AG04450 (cell line): ENCODE measurements at regions of chr5 and their contacts with region 1.

Region 1: DNA sequence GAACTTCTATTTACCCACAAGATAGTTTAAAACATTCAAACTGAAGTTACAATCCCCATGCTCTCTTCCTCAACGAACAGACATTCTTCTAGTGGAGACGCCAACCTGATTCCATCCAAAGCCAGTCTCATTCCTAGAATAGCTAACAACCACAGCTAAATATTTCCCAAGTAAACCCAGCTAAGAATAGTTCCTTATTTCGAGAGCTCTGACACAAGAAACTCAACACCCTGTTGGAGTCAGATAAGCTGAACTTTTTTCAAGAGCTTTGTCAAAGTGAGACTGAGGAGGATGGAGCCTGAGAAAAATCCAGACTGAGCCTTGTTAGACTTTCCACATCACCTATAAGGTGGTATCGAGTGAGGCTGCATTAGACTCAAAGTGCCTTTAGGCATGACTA is 56.7 kb upstream of the RPS23 start:
- DNase-seq: peak; percentile 81
- H3K4me3 ChIP-seq: no peak overlapping the region
- H3K27ac ChIP-seq: peak overlapping the region; percentile 90
- H3K27me3 ChIP-seq: no peaks in the 10 kb centered on the region
- CTCF ChIP-seq: no peak

Region 2: DNA sequence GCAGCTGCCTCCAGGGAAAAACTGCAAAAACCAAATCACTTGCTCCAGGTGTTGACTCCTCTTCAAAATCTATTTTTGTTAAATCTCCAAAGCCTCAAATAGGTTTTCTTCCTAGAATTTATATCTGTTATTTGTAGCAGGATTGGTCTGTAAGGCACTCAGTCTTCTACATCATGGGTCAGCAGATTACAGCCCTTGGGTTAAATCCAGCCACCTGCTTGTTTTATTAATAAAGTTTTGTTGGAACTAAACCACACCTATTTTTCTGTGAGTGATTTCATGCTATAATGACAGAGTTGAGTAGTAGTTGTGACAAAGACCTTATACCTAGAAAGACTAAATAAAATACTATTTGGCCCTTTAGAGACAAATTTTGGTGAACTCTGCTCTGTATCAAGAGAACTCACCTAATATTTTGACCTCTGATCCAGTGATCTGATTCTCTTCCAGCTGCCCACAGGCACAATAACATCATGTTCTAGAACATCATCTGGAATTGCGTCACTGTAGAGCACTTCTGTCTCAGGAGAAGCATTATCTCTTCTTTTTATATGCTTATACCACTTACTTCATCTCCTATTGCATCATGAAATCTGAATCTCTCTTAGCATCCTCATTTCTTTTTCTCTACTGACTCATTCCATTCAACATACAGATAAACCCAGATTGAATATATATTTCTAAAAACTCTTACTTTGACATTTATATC is 186.8 kb before region 1 on chr5:
- CTCF ChIA-PET with region 1: no interaction called
- POLR2A ChIA-PET with region 1: no interaction called
- DNase-seq: no peak
- H3K4me3 ChIP-seq: no peak overlapping the region
- H3K27ac ChIP-seq: no peak overlapping the region
- H3K27me3 ChIP-seq: no peaks in the 10 kb centered on the region
- CTCF ChIP-seq: no peak

Region 3: GRCh38 chr5:82174128-82174918 is 160.5 kb before region 1 on chr5:
- CTCF ChIA-PET with region 1: no interaction called
- POLR2A ChIA-PET with region 1: no interaction called
- DNase-seq: no peak
- H3K4me3 ChIP-seq: no peak overlapping the region
- H3K27ac ChIP-seq: no peak overlapping the region
- H3K27me3 ChIP-seq: no peaks in the 10 kb centered on the region
- CTCF ChIP-seq: peak; percentile 58

Region 4: GRCh38 chr5:82277613-82278094 is 57.2 kb before region 1 on chr5:
- CTCF ChIA-PET with region 1: no interaction called
- POLR2A ChIA-PET with region 1: interaction called, 13 read pairs
- DNase-seq: no peak
- H3K4me3 ChIP-seq: peak overlapping the region; percentile 93
- H3K27ac ChIP-seq: peak overlapping the region; percentile 53
- H3K27me3 ChIP-seq: no peaks in the 10 kb centered on the region
- CTCF ChIP-seq: no peak

Region 5: GRCh38 chr5:82312373-82312856 is 22.4 kb before region 1 on chr5:
- CTCF ChIA-PET with region 1: interaction called, 19 read pairs
- POLR2A ChIA-PET with region 1: interaction called, 3 read pairs
- DNase-seq: peak; percentile 69
- H3K4me3 ChIP-seq: no peak overlapping the region
- H3K27ac ChIP-seq: no peak overlapping the region
- H3K27me3 ChIP-seq: no peaks in the 10 kb centered on the region
- CTCF ChIP-seq: peak; percentile 98